Activated CD4-positive, alpha-beta memory T cell treated with anti-CD3 and anti-CD28 coated beads, Interleukin-2, amount 10 ng/mL, durations not matched to agents 7 days and 5 days (primary cell): ENCODE measurements at regions of chr7 and their contacts with region 1.

Region 1: GRCh38 chr7:137656227-137656849 is 190.4 kb downstream of the DGKI start:
- DNase-seq: peak; percentile 72
- H3K4me3 Mint-ChIP-seq: no peak overlapping the region
- H3K27ac Mint-ChIP-seq: no peak overlapping the region
- H3K4me1 Mint-ChIP-seq: no peaks in the 10 kb centered on the region
- H3K27me3 Mint-ChIP-seq: peaks cover 8% of the 10 kb centered on the region

Region 2: GRCh38 chr7:137667633-137668387 is 11.5 kb after region 1 on chr7:
- CTCF ChIA-PET with region 1: interaction called, 22 read pairs
- POLR2A ChIA-PET with region 1: no interaction called
- DNase-seq: no peak
- H3K4me3 Mint-ChIP-seq: no peak overlapping the region
- H3K27ac Mint-ChIP-seq: no peak overlapping the region
- H3K4me1 Mint-ChIP-seq: no peaks in the 10 kb centered on the region
- H3K27me3 Mint-ChIP-seq: peaks cover 18% of the 10 kb centered on the region

Region 3: GRCh38 chr7:138008547-138009349 is 352.4 kb after region 1 on chr7:
- CTCF ChIA-PET with region 1: interaction called, 31 read pairs
- POLR2A ChIA-PET with region 1: no interaction called
- DNase-seq: peak; percentile 46
- H3K4me3 Mint-ChIP-seq: no peak overlapping the region
- H3K27ac Mint-ChIP-seq: no peak overlapping the region
- H3K4me1 Mint-ChIP-seq: peaks cover 4% of the 10 kb centered on the region
- H3K27me3 Mint-ChIP-seq: peaks cover 3% of the 10 kb centered on the region